B cell (primary cell): ENCODE measurements at regions of chr4 and their contacts with region 1.

Region 1: DNA sequence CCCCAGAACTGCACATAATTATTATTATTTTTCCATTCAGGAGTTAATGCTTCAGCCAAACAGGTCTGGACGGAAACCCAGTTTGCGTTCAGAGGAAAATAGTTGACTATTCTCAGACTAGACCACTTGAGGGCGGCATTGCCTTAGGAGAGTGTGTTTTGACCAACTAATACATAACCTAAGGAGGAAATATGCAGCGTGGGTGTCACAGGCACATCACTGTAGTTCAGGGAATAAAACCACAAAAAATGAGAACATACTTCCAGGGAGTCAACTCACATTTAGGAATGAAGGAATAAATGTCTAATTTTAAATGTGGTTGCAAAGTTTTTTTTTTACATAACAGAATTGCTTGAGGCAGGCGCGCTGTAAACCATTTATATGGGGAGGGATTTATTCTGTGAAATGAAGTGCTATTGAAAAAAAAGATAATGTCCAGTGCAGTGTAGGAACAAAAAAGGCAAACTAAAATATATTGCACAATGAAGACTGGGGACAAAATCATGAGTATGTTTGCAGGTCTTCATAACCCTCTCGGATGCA is 93.3 kb downstream of the SYNPO2 start:
- DNase-seq: peak; percentile 60
- ATAC-seq: peak; percentile 53
- H3K4me3 ChIP-seq: no peak overlapping the region
- H3K4me3 Mint-ChIP-seq: no peak overlapping the region
- H3K27ac ChIP-seq: no peak overlapping the region
- H3K27ac Mint-ChIP-seq: no peak overlapping the region
- H3K4me1 ChIP-seq: no peaks in the 10 kb centered on the region
- H3K4me1 Mint-ChIP-seq: peaks cover 2% of the 10 kb centered on the region
- H3K27me3 ChIP-seq: no peaks in the 10 kb centered on the region
- H3K27me3 Mint-ChIP-seq: peaks cover 13% of the 10 kb centered on the region
- CTCF ChIP-seq: peak; percentile 90

Region 2: GRCh38 chr4:118898684-118899138 is 83.2 kb before region 1 on chr4:
- CTCF ChIA-PET with region 1: no interaction called
- POLR2A ChIA-PET with region 1: no interaction called
- intact Hi-C with region 1: no loop called
- DNase-seq: no peak
- ATAC-seq: no peak
- H3K4me3 ChIP-seq: no peak overlapping the region
- H3K4me3 Mint-ChIP-seq: no peak overlapping the region
- H3K27ac ChIP-seq: no peak overlapping the region
- H3K27ac Mint-ChIP-seq: no peak overlapping the region
- H3K4me1 ChIP-seq: no peaks in the 10 kb centered on the region
- H3K4me1 Mint-ChIP-seq: no peaks in the 10 kb centered on the region
- H3K27me3 ChIP-seq: peaks cover 0 to 3% (median 0%) of the 10 kb centered on the region in 4 experiments
- H3K27me3 Mint-ChIP-seq: peaks cover 17% of the 10 kb centered on the region
- CTCF ChIP-seq: no peak

Region 3: DNA sequence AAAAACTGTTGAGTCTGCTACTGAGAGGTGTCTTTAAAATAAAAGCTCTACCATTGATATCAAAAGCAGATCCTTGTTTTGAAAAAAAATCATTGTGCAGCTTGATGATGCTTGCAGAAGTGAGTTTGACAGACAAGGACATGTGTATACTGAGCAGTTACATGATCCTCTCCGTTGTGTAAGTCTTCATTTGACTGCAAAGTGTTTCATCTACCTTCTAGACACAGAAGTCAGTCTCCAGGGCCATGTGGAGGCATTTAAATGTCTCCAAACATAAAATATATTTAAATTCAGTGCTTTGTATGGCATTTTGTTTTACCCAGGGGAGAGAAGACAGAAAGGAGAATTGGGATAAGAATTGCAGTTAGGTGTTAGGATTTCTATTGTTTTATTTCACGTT is 45.9 kb after region 1 on chr4:
- CTCF ChIA-PET with region 1: no interaction called
- POLR2A ChIA-PET with region 1: no interaction called
- intact Hi-C with region 1: no loop called
- DNase-seq: no peak
- ATAC-seq: no peak
- H3K4me3 ChIP-seq: no peak overlapping the region
- H3K4me3 Mint-ChIP-seq: no peak overlapping the region
- H3K27ac ChIP-seq: no peak overlapping the region
- H3K27ac Mint-ChIP-seq: no peak overlapping the region
- H3K4me1 ChIP-seq: no peaks in the 10 kb centered on the region
- H3K4me1 Mint-ChIP-seq: no peaks in the 10 kb centered on the region
- H3K27me3 ChIP-seq: no peaks in the 10 kb centered on the region
- H3K27me3 Mint-ChIP-seq: peaks cover 22% of the 10 kb centered on the region
- CTCF ChIP-seq: no peak

Region 4: GRCh38 chr4:119041951-119042560 is 60.1 kb after region 1 on chr4:
- CTCF ChIA-PET with region 1: interaction called, 3 read pairs
- POLR2A ChIA-PET with region 1: no interaction called
- intact Hi-C with region 1: loop called (anchors 1 kb)
- DNase-seq: peak; percentile 74
- ATAC-seq: peak; percentile 81
- H3K4me3 ChIP-seq: no peak overlapping the region
- H3K4me3 Mint-ChIP-seq: no peak overlapping the region
- H3K27ac ChIP-seq: no peak overlapping the region
- H3K27ac Mint-ChIP-seq: no peak overlapping the region
- H3K4me1 ChIP-seq: peaks cover 0 to 4% of the 10 kb centered on the region in 2 donors
- H3K4me1 Mint-ChIP-seq: peaks cover 6% of the 10 kb centered on the region
- H3K27me3 ChIP-seq: no peaks in the 10 kb centered on the region
- H3K27me3 Mint-ChIP-seq: no peaks in the 10 kb centered on the region
- CTCF ChIP-seq: peak; percentile 88